Mammary epithelial cell (primary cell): ENCODE measurements at regions of chr18 and their contacts with region 1.

Region 1: DNA sequence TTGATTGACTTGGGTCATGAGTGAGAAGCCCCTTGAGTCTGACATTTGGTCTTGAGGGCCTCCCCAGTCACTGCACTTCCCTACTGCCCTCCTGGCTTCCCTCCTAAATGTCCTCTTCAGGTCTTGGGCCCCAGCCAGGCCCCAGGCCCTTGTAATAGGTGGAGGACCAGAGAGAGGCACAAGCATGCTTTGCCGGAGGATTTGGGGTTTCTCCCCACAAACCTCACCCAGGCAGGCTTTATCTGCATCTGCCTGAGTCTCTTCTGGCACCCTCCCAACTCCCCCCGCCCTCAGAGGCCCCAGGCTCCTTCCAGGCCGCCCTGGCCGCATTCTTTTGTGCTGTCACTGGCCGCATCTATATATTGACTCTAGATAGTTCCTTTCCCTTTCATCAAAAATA is 270.7 kb downstream of the HAUS1 start:
- DNase-seq: peak; percentile 4
- H3K4me3 ChIP-seq: no peak overlapping the region
- H3K27ac ChIP-seq: no peak overlapping the region
- H3K4me1 ChIP-seq: no peaks in the 10 kb centered on the region
- H3K27me3 ChIP-seq: no peaks in the 10 kb centered on the region
- CTCF ChIP-seq: no peak

Region 2: GRCh38 chr18:46433121-46433826 is 58.4 kb after region 1 on chr18:
- CTCF ChIA-PET with region 1: no interaction called
- dilution Hi-C with region 1: no loop called
- in situ Hi-C with region 1: no loop called
- intact Hi-C with region 1: loop called (anchors 10 kb)
- DNase-seq: no peak
- H3K4me3 ChIP-seq: no peak overlapping the region
- H3K27ac ChIP-seq: no peak overlapping the region
- H3K4me1 ChIP-seq: no peaks in the 10 kb centered on the region
- H3K27me3 ChIP-seq: no peaks in the 10 kb centered on the region
- CTCF ChIP-seq: no peak